Gastrocnemius medialis (tissue), 4 donors: ENCODE measurements at regions of chr2 and their contacts with region 1.

Region 1: DNA sequence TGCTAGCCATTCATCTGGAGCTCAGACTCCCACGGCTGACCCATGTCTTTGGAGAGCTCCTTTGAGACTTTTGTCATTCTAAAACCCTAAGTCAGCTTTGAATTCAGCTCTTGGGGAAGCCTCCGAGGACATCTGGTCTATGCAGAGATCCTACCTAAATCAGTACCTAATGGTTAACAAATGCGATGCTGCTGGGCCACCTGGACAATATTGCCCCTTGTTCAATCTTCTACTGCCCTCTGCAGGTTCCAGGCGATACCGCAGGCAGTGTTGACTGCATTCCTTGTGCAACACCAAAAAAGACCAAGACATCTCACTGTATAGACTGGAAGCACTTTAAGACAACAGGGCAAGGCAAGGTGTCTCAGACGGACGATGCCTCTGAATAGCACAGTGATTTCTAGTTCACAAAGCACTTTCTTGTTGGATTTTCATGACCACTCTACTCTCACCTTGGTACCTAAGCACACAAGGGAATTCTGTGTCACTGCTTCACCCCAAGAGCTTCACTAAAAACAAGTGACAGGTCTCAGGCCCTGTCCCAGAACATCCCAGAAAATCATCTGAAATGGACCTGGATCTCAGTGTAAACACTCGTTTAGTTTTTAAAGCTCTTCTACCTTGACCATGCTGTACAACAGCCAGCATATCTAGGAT is 80.9 kb downstream of the XDH start:
- DNase-seq: peak; percentile 60 to 75
- ATAC-seq: peak; percentile 79 to 93
- H3K4me3 ChIP-seq: no peak overlapping the region
- H3K27ac ChIP-seq: peak overlapping the region; percentile 20 to 78 (median 67)
- H3K4me1 ChIP-seq: peaks cover 9 to 17% of the 10 kb centered on the region in 2 donors
- H3K27me3 ChIP-seq: no peaks in the 10 kb centered on the region
- CTCF ChIP-seq: peak; percentile 85 to 96 (median 91)
- POLR2A ChIP-seq: no peak

Region 2: GRCh38 chr2:30711646-30712085 is 622.0 kb before region 1 on chr2:
- in situ Hi-C with region 1: loop called in 3 of 4 experiments (anchors 5 to 10 kb)
- intact Hi-C with region 1: loop called (anchors 1 kb)
- DNase-seq: peak; percentile 68 to 81
- ATAC-seq: peak; percentile 83 to 91
- H3K4me3 ChIP-seq: no peak overlapping the region
- H3K27ac ChIP-seq: no peak overlapping the region
- H3K4me1 ChIP-seq: no peaks in the 10 kb centered on the region
- H3K27me3 ChIP-seq: no peaks in the 10 kb centered on the region
- CTCF ChIP-seq: peak; percentile 87 to 100 (median 98)
- POLR2A ChIP-seq: no peak

Region 3: DNA sequence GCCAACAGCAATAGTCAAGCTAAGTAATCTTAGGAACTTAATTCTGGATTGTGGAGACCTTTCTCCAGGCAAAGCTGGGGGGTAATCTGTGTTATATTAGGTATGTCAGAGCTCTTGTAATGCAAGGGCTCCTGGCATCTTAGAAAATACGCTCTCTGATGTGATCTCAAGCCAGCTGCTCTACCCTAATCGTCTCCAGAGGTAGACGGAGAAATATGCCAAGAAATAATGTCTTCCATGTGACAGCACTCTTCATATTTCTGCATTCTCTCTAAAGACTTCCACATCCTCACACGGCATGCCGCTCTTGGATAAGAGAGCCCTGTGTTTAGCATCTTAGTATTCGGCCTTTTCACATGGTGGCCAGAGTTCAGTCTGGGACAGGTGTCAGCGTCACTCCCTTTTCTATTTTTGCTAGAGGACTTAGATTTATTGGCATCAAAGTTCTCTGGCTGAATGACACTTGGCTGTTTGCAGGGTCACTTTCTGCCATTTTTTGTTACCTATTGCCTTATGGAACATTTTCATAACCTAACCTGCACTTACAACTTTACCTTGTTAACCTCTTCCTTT is 551.6 kb before region 1 on chr2:
- in situ Hi-C with region 1: loop called in 1 of 4 experiments (anchors 10 kb)
- intact Hi-C with region 1: no loop called
- DNase-seq: peak in 1 of 2 donors; percentile 26
- ATAC-seq: peak; percentile 64 to 73
- H3K4me3 ChIP-seq: no peak overlapping the region
- H3K27ac ChIP-seq: peak overlapping the region in 1 of 4 donors; percentile 65
- H3K4me1 ChIP-seq: peaks cover 10 to 36% of the 10 kb centered on the region in 2 donors
- H3K27me3 ChIP-seq: no peaks in the 10 kb centered on the region
- CTCF ChIP-seq: no peak
- POLR2A ChIP-seq: no peak

Region 4: DNA sequence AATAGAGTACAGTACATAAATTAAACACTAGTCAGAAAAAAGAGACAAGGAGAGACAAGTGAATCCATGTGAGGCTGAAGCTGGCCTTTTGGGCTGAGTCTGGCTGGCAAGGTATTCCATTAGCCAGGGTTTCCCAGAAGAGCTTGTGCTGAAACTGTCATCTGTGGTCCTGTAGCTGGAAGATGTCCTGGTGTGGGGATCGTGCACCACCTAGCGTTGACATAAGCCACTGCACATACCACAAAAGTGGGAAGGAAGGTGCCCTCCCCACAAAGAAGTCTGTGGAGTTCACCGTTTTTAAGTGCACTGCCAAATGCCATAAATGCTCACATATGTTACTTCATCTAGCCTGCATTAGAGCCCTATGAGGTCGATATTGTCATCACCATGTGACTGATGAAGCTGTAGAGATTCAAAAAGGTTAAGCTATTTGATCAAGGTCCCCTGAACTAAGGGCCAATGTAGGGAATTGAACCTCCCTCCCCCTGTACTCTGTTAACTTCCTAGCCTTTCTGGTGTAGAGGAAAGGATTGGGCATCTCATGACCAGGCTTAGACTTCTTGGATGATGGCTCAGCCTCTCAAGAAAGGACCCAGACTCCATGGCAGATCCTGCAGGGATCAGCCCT is 163.5 kb before region 1 on chr2:
- in situ Hi-C with region 1: no loop called
- intact Hi-C with region 1: loop called (anchors 5 kb)
- DNase-seq: peak; percentile 26 to 46
- ATAC-seq: peak; percentile 82 to 83
- H3K4me3 ChIP-seq: no peak overlapping the region
- H3K27ac ChIP-seq: no peak overlapping the region
- H3K4me1 ChIP-seq: no peaks in the 10 kb centered on the region
- H3K27me3 ChIP-seq: no peaks in the 10 kb centered on the region
- CTCF ChIP-seq: peak; percentile 59 to 85 (median 79)
- POLR2A ChIP-seq: no peak